Naive thymus-derived CD4-positive, alpha-beta T cell (primary cell): ENCODE measurements at regions of chr10 and their contacts with region 1.

Region 1: DNA sequence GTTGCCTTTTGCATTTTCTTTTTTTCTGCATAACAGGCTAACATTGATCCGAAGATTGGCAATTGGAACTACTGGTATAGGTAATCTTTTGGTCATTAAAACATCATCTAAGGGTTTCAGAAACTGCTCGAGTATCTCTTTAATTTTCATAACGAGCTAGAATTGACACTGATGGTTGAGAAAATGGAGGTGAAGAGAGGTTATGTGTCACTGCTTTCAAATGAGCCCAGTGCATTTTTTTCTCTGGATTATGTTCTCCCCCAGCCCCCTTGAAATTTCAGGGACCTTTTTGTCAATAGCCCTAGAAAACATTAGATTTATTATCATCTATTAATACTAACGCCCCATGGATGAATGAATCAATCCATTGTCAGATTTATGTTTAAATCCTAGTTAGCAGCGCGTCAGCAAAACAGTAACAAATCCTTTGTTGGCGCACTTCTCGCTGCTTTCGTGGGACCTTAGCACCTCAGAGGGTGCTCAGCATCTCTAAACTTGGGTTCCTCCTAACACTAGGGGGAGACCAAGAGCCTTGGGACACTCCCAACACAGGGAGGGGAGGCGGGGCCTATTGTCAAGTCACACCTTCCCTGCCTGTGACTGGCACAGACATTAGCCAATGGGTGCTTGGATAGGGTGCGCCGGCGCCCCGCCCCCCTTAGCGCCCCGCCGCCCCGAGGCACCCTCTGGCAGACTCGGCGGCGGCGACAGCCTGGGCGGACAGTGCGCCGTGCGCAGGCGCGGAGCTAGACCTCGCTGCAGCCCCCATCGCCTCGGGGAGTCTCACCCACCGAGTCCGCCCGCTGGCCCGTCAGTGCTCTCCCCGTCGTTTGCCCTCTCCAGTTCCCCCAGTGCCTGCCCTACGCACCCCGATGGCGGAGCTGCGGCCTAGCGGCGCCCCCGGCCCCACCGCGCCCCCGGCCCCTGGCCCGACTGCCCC is at the start of gene SUFU:
- DNase-seq: peak; percentile 91 to 99 (median 98)
- ATAC-seq: peak; percentile 85
- H3K4me3 ChIP-seq: peak within 1 kb of the TSS; percentile 92
- H3K4me3 Mint-ChIP-seq: no peak within 1 kb of the TSS
- H3K27ac ChIP-seq: peak within 1 kb of the TSS; percentile 88
- H3K27ac Mint-ChIP-seq: peak within 1 kb of the TSS in 7 of 9 donors; percentile 78 to 95 (median 83)
- H3K4me1 ChIP-seq: peaks cover 19 to 29% of the 10 kb centered on the region in 2 donors
- H3K4me1 Mint-ChIP-seq: peaks cover 22 to 49% (median 41%) of the 10 kb centered on the region in 7 donors
- H3K27me3 ChIP-seq: no peaks in the 10 kb centered on the region
- H3K27me3 Mint-ChIP-seq: no peaks in the 10 kb centered on the region
- total RNA-seq, gene SUFU: 10.7 to 17.5 (median 16.1) TPM

Region 2: GRCh38 chr10:101830322-101831168 is 673.0 kb before region 1 on chr10:
- CTCF ChIA-PET with region 1: no interaction called
- POLR2A ChIA-PET with region 1: no interaction called
- intact Hi-C with region 1: loop called in 1 of 2 experiments (anchors 2 kb)
- DNase-seq: peak; percentile 89 to 98 (median 95)
- ATAC-seq: peak; percentile 90
- H3K4me3 ChIP-seq: peak overlapping the region; percentile 66
- H3K4me3 Mint-ChIP-seq: peak overlapping the region; percentile 79 to 94 (median 88)
- H3K27ac ChIP-seq: peak overlapping the region; percentile 85
- H3K27ac Mint-ChIP-seq: peak overlapping the region; percentile 94 to 100 (median 99)
- H3K4me1 ChIP-seq: peaks cover 22 to 53% of the 10 kb centered on the region in 2 donors
- H3K4me1 Mint-ChIP-seq: peaks cover 41 to 59% (median 53%) of the 10 kb centered on the region in 7 donors
- H3K27me3 ChIP-seq: no peaks in the 10 kb centered on the region
- H3K27me3 Mint-ChIP-seq: peaks cover 0 to 4% (median 0%) of the 10 kb centered on the region in 5 donors

Region 3: GRCh38 chr10:102225646-102226541 is 277.7 kb before region 1 on chr10 and contains the start of gene ELOVL3:
- CTCF ChIA-PET with region 1: no interaction called
- POLR2A ChIA-PET with region 1: no interaction called
- intact Hi-C with region 1: loop called in 1 of 2 experiments (anchors 1 kb)
- DNase-seq: peak; percentile 56 to 83 (median 79)
- ATAC-seq: peak; percentile 95
- H3K4me3 ChIP-seq: peak within 1 kb of the TSS; percentile 26
- H3K4me3 Mint-ChIP-seq: peak within 1 kb of the TSS; percentile 72 to 95 (median 80)
- H3K27ac ChIP-seq: no peak within 1 kb of the TSS
- H3K27ac Mint-ChIP-seq: peak within 1 kb of the TSS in 5 of 9 donors; percentile 14 to 78 (median 74)
- H3K4me1 ChIP-seq: peaks cover 20 to 22% of the 10 kb centered on the region in 2 donors
- H3K4me1 Mint-ChIP-seq: peaks cover 14 to 23% (median 21%) of the 10 kb centered on the region in 7 donors
- H3K27me3 ChIP-seq: peaks cover 3 to 5% of the 10 kb centered on the region in 2 donors
- H3K27me3 Mint-ChIP-seq: peaks cover 36 to 74% (median 39%) of the 10 kb centered on the region in 5 donors
- total RNA-seq, gene ELOVL3: not detected

Region 4: DNA sequence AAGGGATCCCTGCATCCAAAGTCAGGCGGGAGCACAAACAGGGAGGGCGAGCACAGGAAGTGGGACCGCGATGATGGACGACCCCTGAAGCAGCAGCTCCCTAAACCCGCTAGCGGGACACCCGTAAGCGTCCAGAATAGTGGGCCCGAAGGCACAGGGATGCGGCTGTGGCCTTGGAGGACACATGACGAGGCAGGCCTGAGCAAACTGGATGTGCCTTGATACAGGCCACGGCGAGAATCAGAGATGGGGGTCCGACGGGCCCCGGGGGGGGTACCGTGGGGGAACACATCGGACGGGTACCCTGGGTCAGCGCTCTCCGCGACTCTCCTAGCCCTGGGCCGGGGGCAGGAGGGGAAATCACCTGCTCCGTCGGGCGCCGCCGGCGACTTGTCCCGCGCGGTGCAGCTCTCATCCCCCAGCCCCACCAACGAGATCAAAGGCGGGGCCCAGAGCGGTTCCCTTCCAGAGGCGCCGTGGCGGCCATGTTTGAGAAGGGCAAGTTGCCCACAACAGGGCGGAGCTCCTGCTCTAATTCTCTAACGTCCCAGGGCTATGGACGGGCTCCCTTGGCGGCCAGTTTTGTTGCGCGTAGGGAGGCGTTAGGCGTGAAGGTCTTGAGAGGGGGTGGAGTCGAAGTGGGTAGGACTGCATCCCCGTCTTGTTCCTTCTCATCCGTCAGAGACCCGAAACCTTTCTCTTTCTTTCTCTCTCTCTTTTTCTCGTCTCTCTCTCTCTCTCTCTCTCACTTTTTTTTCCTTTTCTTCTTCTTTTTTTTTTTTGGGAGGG is 71.2 kb before region 1 on chr10 and contains the start of gene CUEDC2:
- CTCF ChIA-PET with region 1: interaction called, 3 read pairs
- POLR2A ChIA-PET with region 1: interaction called, 3 read pairs
- intact Hi-C with region 1: loop called (anchors 1 kb)
- DNase-seq: peak; percentile 86 to 97 (median 91)
- ATAC-seq: peak; percentile 98
- H3K4me3 ChIP-seq: peak within 1 kb of the TSS; percentile 96
- H3K4me3 Mint-ChIP-seq: peak within 1 kb of the TSS; percentile 81 to 96 (median 93)
- H3K27ac ChIP-seq: peak within 1 kb of the TSS; percentile 80
- H3K27ac Mint-ChIP-seq: peak within 1 kb of the TSS; percentile 90 to 97 (median 94)
- H3K4me1 ChIP-seq: peaks cover 28 to 49% of the 10 kb centered on the region in 2 donors
- H3K4me1 Mint-ChIP-seq: peaks cover 38 to 60% (median 48%) of the 10 kb centered on the region in 7 donors
- H3K27me3 ChIP-seq: no peaks in the 10 kb centered on the region
- H3K27me3 Mint-ChIP-seq: no peaks in the 10 kb centered on the region
- total RNA-seq, gene CUEDC2: 27.0 to 69.0 (median 31.9) TPM

Region 5: GRCh38 chr10:102615361-102615760 is 111.8 kb after region 1 on chr10:
- CTCF ChIA-PET with region 1: no interaction called
- POLR2A ChIA-PET with region 1: interaction called, 3 read pairs
- intact Hi-C with region 1: loop called in 1 of 2 experiments (anchors 1 kb)
- DNase-seq: no peak
- ATAC-seq: no peak
- H3K4me3 ChIP-seq: no peak overlapping the region
- H3K4me3 Mint-ChIP-seq: no peak overlapping the region
- H3K27ac ChIP-seq: no peak overlapping the region
- H3K27ac Mint-ChIP-seq: peak overlapping the region in 6 of 9 donors; percentile 29 to 84 (median 53)
- H3K4me1 ChIP-seq: peaks cover 0 to 35% of the 10 kb centered on the region in 2 donors
- H3K4me1 Mint-ChIP-seq: peaks cover 7 to 36% (median 32%) of the 10 kb centered on the region in 7 donors
- H3K27me3 ChIP-seq: no peaks in the 10 kb centered on the region
- H3K27me3 Mint-ChIP-seq: no peaks in the 10 kb centered on the region

Region 6: GRCh38 chr10:102917962-102918816 is 414.6 kb after region 1 on chr10 and contains the start of gene CNNM2:
- CTCF ChIA-PET with region 1: no interaction called
- POLR2A ChIA-PET with region 1: no interaction called
- intact Hi-C with region 1: loop called (anchors 1 kb)
- DNase-seq: peak; percentile 95 to 100 (median 99)
- ATAC-seq: peak; percentile 95
- H3K4me3 ChIP-seq: peak within 1 kb of the TSS; percentile 98
- H3K4me3 Mint-ChIP-seq: peak within 1 kb of the TSS; percentile 94 to 99 (median 96)
- H3K27ac ChIP-seq: peak within 1 kb of the TSS; percentile 83
- H3K27ac Mint-ChIP-seq: peak within 1 kb of the TSS; percentile 82 to 97 (median 94)
- H3K4me1 ChIP-seq: peaks cover 34 to 35% of the 10 kb centered on the region in 2 donors
- H3K4me1 Mint-ChIP-seq: peaks cover 41 to 68% (median 56%) of the 10 kb centered on the region in 7 donors
- H3K27me3 ChIP-seq: no peaks in the 10 kb centered on the region
- H3K27me3 Mint-ChIP-seq: peaks cover 0 to 14% (median 5%) of the 10 kb centered on the region in 5 donors
- total RNA-seq, gene CNNM2: 9.3 to 17.5 (median 12.0) TPM

Region 7: GRCh38 chr10:103353281-103353680 is 849.7 kb after region 1 on chr10:
- CTCF ChIA-PET with region 1: no interaction called
- POLR2A ChIA-PET with region 1: no interaction called
- intact Hi-C with region 1: no loop called
- DNase-seq: no peak
- ATAC-seq: no peak
- H3K4me3 ChIP-seq: no peak overlapping the region
- H3K4me3 Mint-ChIP-seq: no peak overlapping the region
- H3K27ac ChIP-seq: no peak overlapping the region
- H3K27ac Mint-ChIP-seq: no peak overlapping the region
- H3K4me1 ChIP-seq: peaks cover 6 to 11% of the 10 kb centered on the region in 2 donors
- H3K4me1 Mint-ChIP-seq: peaks cover 0 to 14% (median 9%) of the 10 kb centered on the region in 7 donors
- H3K27me3 ChIP-seq: no peaks in the 10 kb centered on the region
- H3K27me3 Mint-ChIP-seq: no peaks in the 10 kb centered on the region